ENCODE measurements at regions of chr6 and their contacts with region 1.

Region 1: DNA sequence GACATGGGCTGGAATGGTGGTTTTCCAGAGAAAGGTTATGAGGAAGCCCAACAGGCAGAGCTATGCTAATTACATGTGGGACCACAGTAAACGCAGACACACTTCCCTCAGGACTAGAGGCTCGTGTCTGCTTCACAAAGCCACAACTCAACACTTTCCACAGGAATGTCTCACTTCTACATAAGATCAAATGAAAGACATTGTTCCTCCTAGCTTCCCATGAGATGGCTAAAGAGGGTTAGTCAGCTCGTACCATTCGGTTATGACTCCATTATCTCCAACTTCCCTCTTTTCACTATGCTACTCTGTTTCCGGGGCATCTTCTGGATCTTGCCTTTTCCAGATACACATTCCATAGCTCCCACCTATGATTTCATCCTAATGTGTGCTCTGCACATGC is 29.1 kb upstream of the ZC3H12D start:
- DNase-seq: no peak
- H3K4me3 ChIP-seq: no peak overlapping the region
- H3K4me3 Mint-ChIP-seq: no peak overlapping the region
- H3K27ac Mint-ChIP-seq: no peak overlapping the region
- H3K4me1 ChIP-seq: no peaks in the 10 kb centered on the region
- H3K4me1 Mint-ChIP-seq: no peaks in the 10 kb centered on the region
- H3K27me3 ChIP-seq: no peaks in the 10 kb centered on the region
- H3K27me3 Mint-ChIP-seq: no peaks in the 10 kb centered on the region
- CTCF ChIP-seq: no peak

Region 2: GRCh38 chr6:149028767-149029405 is 485.0 kb before region 1 on chr6:
- CTCF ChIA-PET with region 1: no interaction called
- POLR2A ChIA-PET with region 1: no interaction called
- intact Hi-C with region 1: loop called (anchors 1 kb)
- DNase-seq: peak; percentile 55 to 74
- H3K4me3 ChIP-seq: no peak overlapping the region
- H3K4me3 Mint-ChIP-seq: no peak overlapping the region
- H3K27ac Mint-ChIP-seq: no peak overlapping the region
- H3K4me1 ChIP-seq: no peaks in the 10 kb centered on the region
- H3K4me1 Mint-ChIP-seq: peaks cover 6% of the 10 kb centered on the region
- H3K27me3 ChIP-seq: no peaks in the 10 kb centered on the region
- H3K27me3 Mint-ChIP-seq: no peaks in the 10 kb centered on the region
- CTCF ChIP-seq: peak; percentile 42 to 61

Region 3: GRCh38 chr6:149082286-149082707 is 431.6 kb before region 1 on chr6:
- CTCF ChIA-PET with region 1: no interaction called
- POLR2A ChIA-PET with region 1: no interaction called
- intact Hi-C with region 1: loop called (anchors 2 kb)
- DNase-seq: peak; percentile 75 to 79
- H3K4me3 ChIP-seq: no peak overlapping the region
- H3K4me3 Mint-ChIP-seq: no peak overlapping the region
- H3K27ac Mint-ChIP-seq: no peak overlapping the region
- H3K4me1 ChIP-seq: no peaks in the 10 kb centered on the region
- H3K4me1 Mint-ChIP-seq: no peaks in the 10 kb centered on the region
- H3K27me3 ChIP-seq: no peaks in the 10 kb centered on the region
- H3K27me3 Mint-ChIP-seq: no peaks in the 10 kb centered on the region
- CTCF ChIP-seq: peak; percentile 76 to 77

Region 4: DNA sequence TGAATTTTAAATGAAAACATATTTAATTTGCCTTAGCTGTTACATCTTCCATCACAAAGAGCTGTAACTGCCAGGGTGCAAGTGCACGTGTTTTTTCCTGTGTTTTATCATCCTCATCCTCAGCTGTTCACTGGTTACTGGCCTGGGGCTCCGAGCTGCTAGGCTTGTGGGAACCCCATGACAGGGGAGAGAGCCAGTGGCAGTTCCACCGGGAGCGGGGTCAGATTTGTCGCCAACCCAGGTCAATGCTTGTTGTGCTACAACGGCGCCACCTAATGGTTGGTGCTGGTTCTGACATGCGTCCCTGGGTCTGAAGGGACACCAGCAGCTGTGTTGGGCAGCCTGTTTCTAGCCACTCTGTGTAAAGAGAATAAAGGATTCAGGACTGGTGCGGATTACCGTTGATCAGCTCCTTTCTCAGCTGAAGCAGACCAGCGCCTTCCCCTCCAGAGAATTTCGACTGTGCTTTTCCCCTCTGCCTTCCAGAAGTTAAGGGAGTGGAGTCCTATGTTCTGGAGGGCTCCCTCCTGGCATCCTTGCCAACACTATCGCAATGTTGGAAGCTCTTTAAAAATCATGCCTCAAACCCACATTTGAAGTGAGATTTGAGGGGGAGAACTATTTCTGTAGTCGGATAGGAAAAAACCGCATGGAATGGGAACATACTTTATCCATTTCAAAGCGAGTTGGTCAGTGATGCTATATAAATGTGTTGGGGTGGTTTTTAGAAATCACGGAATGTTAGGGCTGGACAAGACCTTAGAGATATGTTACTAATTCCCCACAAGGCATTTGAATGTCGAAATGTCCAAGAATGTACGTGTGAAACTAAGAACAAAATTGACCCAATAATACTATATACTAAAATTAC is 81.8 kb before region 1 on chr6:
- CTCF ChIA-PET with region 1: no interaction called
- POLR2A ChIA-PET with region 1: no interaction called
- intact Hi-C with region 1: loop called (anchors 1 kb)
- DNase-seq: peak; percentile 87 to 91
- H3K4me3 ChIP-seq: no peak overlapping the region
- H3K4me3 Mint-ChIP-seq: no peak overlapping the region
- H3K27ac Mint-ChIP-seq: no peak overlapping the region
- H3K4me1 ChIP-seq: no peaks in the 10 kb centered on the region
- H3K4me1 Mint-ChIP-seq: peaks cover 8% of the 10 kb centered on the region
- H3K27me3 ChIP-seq: no peaks in the 10 kb centered on the region
- H3K27me3 Mint-ChIP-seq: peaks cover 2% of the 10 kb centered on the region
- CTCF ChIP-seq: peak; percentile 79 to 88

Region 5: GRCh38 chr6:149484733-149485700 is 28.9 kb before region 1 on chr6 and contains the start of gene ZC3H12D:
- CTCF ChIA-PET with region 1: no interaction called
- POLR2A ChIA-PET with region 1: no interaction called
- intact Hi-C with region 1: loop called (anchors 1 kb)
- DNase-seq: peak; percentile 76 to 83
- H3K4me3 ChIP-seq: peak within 1 kb of the TSS; percentile 28
- H3K4me3 Mint-ChIP-seq: peak within 1 kb of the TSS; percentile 81
- H3K27ac Mint-ChIP-seq: peak within 1 kb of the TSS; percentile 84
- H3K4me1 ChIP-seq: 0 out of 2 replicates have a peak, but pooled peaks cover 6% of the 10 kb centered on the region
- H3K4me1 Mint-ChIP-seq: peaks cover 12% of the 10 kb centered on the region
- H3K27me3 ChIP-seq: no peaks in the 10 kb centered on the region
- H3K27me3 Mint-ChIP-seq: no peaks in the 10 kb centered on the region
- CTCF ChIP-seq: peak; percentile 16 to 52
- total RNA-seq, gene ZC3H12D: 0.57 and 0.65 TPM in 2 replicates

Region 6: GRCh38 chr6:149534742-149535141 is 20.8 kb after region 1 on chr6:
- CTCF ChIA-PET with region 1: no interaction called
- POLR2A ChIA-PET with region 1: no interaction called
- intact Hi-C with region 1: no loop called
- DNase-seq: no peak
- H3K4me3 ChIP-seq: no peak overlapping the region
- H3K4me3 Mint-ChIP-seq: no peak overlapping the region
- H3K27ac Mint-ChIP-seq: no peak overlapping the region
- H3K4me1 ChIP-seq: no peaks in the 10 kb centered on the region
- H3K4me1 Mint-ChIP-seq: no peaks in the 10 kb centered on the region
- H3K27me3 ChIP-seq: no peaks in the 10 kb centered on the region
- H3K27me3 Mint-ChIP-seq: no peaks in the 10 kb centered on the region
- CTCF ChIP-seq: no peak

Measured in Caco-2 (cell line).